Activated CD8-positive, alpha-beta T cell treated with anti-CD3 and anti-CD28 coated beads, Interleukin-2, amount 10 ng/mL, durations not matched to agents 7 days and 5 days (primary cell): ENCODE measurements at regions of chr12 and their contacts with region 1.

Region 1: GRCh38 chr12:101839324-101840283 is 8.8 kb upstream of the GNPTAB start:
- DNase-seq: peak; percentile 83
- ATAC-seq: peak; percentile 54
- H3K4me3 Mint-ChIP-seq: no peak overlapping the region
- H3K27ac Mint-ChIP-seq: peak overlapping the region; percentile 53
- H3K4me1 Mint-ChIP-seq: peaks cover 17% of the 10 kb centered on the region
- H3K27me3 Mint-ChIP-seq: peaks cover 2% of the 10 kb centered on the region

Region 2: GRCh38 chr12:101539148-101539547 is 300.5 kb before region 1 on chr12:
- CTCF ChIA-PET with region 1: no interaction called
- POLR2A ChIA-PET with region 1: no interaction called
- DNase-seq: no peak
- ATAC-seq: no peak
- H3K4me3 Mint-ChIP-seq: no peak overlapping the region
- H3K27ac Mint-ChIP-seq: no peak overlapping the region
- H3K4me1 Mint-ChIP-seq: no peaks in the 10 kb centered on the region
- H3K27me3 Mint-ChIP-seq: peaks cover 6% of the 10 kb centered on the region

Region 3: DNA sequence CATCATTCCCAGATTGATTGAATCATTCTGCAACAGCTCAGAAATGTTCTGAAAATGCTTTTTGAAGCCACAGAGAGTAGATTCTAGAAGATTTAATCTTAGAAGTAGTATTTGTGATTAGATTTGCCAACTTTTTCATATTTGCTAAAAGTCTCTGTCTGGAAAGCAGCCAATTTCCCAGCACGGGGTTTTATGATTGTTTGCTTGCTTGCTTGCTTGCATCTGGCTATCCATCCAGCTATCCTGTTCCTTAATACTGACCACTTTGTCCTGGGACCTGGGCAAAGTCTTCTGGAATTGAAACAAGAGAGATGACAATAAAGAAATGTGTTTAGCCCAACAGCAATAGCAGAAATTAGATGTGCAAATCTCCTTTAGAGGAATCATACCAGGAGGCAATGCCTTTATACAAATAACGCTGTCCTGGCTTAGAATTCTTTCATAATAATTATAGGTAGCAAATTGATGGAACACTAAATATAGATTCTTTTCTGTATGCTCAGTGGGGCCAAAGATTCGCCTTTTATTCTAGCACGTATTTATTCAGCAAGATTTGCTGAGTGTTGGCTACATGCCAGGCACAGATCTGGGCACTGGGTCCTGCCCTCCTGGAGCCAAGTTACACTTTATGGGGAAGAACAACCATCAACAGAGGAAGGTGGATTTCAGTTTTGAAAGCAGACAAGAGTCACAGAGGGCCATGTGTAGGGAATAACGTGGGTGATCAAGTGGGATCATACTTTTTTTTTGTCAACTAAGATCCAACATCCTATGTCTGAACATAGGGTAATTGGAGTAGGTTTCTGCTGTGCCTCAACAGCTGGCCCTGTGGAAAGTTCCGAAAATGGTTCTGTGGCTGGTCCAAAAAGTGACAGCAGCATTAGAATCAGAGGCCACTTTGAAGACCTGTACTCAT is 219.5 kb before region 1 on chr12:
- CTCF ChIA-PET with region 1: no interaction called
- POLR2A ChIA-PET with region 1: no interaction called
- DNase-seq: no peak
- ATAC-seq: no peak
- H3K4me3 Mint-ChIP-seq: no peak overlapping the region
- H3K27ac Mint-ChIP-seq: no peak overlapping the region
- H3K4me1 Mint-ChIP-seq: peaks cover 4% of the 10 kb centered on the region
- H3K27me3 Mint-ChIP-seq: peaks cover 13% of the 10 kb centered on the region

Region 4: GRCh38 chr12:101773650-101774162 is 65.9 kb before region 1 on chr12:
- CTCF ChIA-PET with region 1: interaction called, 145 read pairs
- POLR2A ChIA-PET with region 1: interaction called, 3 read pairs
- DNase-seq: peak; percentile 80
- ATAC-seq: peak; percentile 79
- H3K4me3 Mint-ChIP-seq: no peak overlapping the region
- H3K27ac Mint-ChIP-seq: peak overlapping the region; percentile 17
- H3K4me1 Mint-ChIP-seq: peaks cover 42% of the 10 kb centered on the region
- H3K27me3 Mint-ChIP-seq: no peaks in the 10 kb centered on the region

Region 5: DNA sequence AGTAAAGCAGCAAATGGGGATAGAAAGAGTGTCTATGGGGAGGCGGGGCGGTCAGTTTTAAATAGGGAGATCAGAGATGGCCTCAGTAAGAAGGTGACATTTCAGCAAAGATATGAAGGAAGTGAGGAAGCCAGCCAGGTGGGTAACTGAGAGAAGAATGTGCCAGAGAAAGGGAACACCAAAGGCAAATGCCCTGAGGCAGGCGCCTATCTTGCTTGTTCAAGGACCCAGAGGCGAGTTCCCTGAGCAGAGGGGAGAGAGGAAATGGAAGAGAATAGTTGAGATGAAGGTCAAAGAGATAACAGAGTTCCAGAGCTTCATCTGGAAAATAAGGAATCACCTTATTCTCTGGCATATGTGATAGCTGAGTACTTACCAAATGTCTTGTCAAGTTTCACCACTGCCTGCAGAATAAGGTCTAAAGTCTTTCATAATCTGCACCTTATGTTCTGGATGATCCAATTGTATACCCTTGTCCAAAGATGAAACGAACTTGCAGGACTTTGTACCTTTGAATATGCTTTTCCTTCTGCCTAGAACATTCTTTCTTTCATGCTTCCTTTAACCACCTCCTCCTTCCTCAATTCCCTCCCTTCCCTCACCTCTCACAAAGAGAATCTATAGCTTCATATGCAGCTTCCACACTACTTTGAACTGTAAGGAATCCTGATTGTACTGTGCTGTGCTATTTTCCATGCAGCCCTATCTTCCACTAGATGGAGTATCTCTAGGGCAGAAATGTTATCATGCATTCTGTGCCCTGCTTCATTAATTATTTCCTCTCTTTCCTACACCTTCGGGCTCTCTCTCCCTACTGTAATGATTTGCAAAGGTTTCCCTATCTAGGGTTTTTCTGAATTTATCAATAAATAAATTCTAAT is 47.3 kb before region 1 on chr12:
- CTCF ChIA-PET with region 1: interaction called, 57 read pairs
- POLR2A ChIA-PET with region 1: no interaction called
- DNase-seq: no peak
- ATAC-seq: peak; percentile 20
- H3K4me3 Mint-ChIP-seq: no peak overlapping the region
- H3K27ac Mint-ChIP-seq: peak overlapping the region; percentile 65
- H3K4me1 Mint-ChIP-seq: peaks cover 60% of the 10 kb centered on the region
- H3K27me3 Mint-ChIP-seq: no peaks in the 10 kb centered on the region

Region 6: GRCh38 chr12:101823891-101824290 is 15.7 kb before region 1 on chr12:
- CTCF ChIA-PET with region 1: interaction called, 97 read pairs
- POLR2A ChIA-PET with region 1: no interaction called
- DNase-seq: peak; percentile 88
- ATAC-seq: peak; percentile 97
- H3K4me3 Mint-ChIP-seq: peak overlapping the region; percentile 58
- H3K27ac Mint-ChIP-seq: peak overlapping the region; percentile 77
- H3K4me1 Mint-ChIP-seq: peaks cover 88% of the 10 kb centered on the region
- H3K27me3 Mint-ChIP-seq: no peaks in the 10 kb centered on the region